ENCODE measurements at regions of chr12 and their contacts with region 1.

Region 1: GRCh38 chr12:6533923-6534694 is at the start of gene GAPDH:
- DNase-seq: peak; percentile 92 to 95
- ATAC-seq: peak; percentile 68 to 76 (median 70)
- H3K4me3 ChIP-seq: peak within 1 kb of the TSS; percentile 86
- H3K27ac ChIP-seq: peak within 1 kb of the TSS; percentile 97
- H3K4me1 ChIP-seq: peaks cover 47% of the 10 kb centered on the region
- H3K27me3 ChIP-seq: no peaks in the 10 kb centered on the region
- CTCF ChIP-seq: no peak
- total RNA-seq, gene GAPDH: 7,136 to 10,782 (median 8,991) TPM

Region 2: DNA sequence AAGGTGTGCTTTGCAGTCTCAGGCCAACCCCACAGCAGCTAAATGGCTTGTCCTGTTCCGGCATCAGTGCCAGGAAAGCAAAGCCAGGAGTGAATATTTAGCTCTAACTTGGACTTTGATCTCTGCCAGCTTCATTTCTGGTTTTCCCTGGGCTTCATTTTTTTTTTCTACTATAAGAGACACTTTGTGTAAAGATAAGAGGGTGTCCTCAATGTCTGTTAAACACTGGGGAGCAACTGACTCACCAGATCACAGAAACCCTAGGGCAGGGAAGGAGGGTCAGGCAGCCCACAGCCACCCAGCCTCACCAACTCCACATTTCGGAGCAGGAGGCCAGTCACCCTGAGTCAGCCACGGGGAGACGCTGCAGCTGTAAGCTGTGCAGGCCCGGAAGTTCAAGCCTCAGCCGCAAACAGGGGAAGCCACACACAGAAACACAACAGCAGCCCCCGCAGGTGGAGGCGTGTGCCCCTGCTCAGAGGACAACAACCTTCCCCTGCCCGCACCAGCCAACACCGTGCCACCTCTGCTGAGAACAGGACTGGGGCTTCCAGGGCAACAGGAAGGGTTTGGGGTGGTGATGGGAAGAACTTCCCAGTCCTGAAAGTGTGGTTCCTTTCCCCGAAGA is 198.5 kb before region 1 on chr12:
- intact Hi-C with region 1: loop called (anchors 5 kb)
- DNase-seq: peak; percentile 84 to 86
- ATAC-seq: peak; percentile 59 to 70 (median 62)
- H3K4me3 ChIP-seq: peak overlapping the region; percentile 99
- H3K27ac ChIP-seq: peak overlapping the region; percentile 88
- H3K4me1 ChIP-seq: peaks cover 56% of the 10 kb centered on the region
- H3K27me3 ChIP-seq: no peaks in the 10 kb centered on the region
- CTCF ChIP-seq: peak; percentile 42

Region 3: DNA sequence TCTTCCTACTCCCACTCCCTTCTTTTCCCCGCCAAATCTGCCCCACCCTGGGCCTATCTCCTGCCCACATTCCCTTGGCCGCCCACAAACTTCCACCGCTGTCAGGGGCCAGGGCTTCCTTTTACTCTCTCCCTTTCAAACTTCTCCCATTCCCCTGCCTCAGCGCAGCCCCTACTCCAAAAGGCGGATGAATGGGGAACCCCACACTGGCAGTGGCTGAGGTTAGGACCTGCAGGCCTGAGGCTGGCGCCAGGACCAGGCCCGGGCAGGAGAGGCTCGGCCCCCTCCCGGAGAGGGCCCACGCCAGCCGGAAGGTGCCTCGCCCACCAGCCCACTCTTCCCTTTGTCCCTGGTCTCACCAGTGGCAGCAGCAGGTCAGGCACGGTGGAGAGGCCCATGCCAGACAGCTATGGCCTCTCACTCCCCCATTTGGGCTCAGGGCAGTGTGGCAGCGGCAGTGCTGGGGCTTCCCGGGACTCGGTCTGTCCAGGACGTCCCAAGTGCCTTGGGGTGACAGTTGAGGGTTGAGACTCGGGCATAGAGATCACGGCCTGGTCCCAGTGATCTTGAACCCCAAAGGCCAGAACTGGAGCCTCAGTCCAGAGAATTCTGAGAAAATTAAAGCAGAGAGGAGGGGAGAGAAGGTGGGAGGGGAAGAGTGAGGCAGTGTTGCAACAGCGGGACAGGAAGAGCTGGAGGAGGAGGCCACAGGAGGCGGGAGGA is 192.5 kb before region 1 on chr12 and contains the start of gene TNFRSF1A:
- intact Hi-C with region 1: loop called (anchors 5 kb)
- DNase-seq: peak; percentile 73 to 85
- ATAC-seq: peak; percentile 81 to 89 (median 84)
- H3K4me3 ChIP-seq: peak within 1 kb of the TSS; percentile 99
- H3K27ac ChIP-seq: peak within 1 kb of the TSS; percentile 88
- H3K4me1 ChIP-seq: peaks cover 46% of the 10 kb centered on the region
- H3K27me3 ChIP-seq: no peaks in the 10 kb centered on the region
- CTCF ChIP-seq: no peak
- total RNA-seq, gene TNFRSF1A: 38.8 to 224 (median 127) TPM

Region 4: GRCh38 chr12:6363611-6364328 is 170.3 kb before region 1 on chr12:
- intact Hi-C with region 1: no loop called
- DNase-seq: peak; percentile 44 to 71
- ATAC-seq: peak; percentile 38 to 59 (median 42)
- H3K4me3 ChIP-seq: peak overlapping the region; percentile 70
- H3K27ac ChIP-seq: peak overlapping the region; percentile 83
- H3K4me1 ChIP-seq: peaks cover 17% of the 10 kb centered on the region
- H3K27me3 ChIP-seq: no peaks in the 10 kb centered on the region
- CTCF ChIP-seq: no peak

Region 5: DNA sequence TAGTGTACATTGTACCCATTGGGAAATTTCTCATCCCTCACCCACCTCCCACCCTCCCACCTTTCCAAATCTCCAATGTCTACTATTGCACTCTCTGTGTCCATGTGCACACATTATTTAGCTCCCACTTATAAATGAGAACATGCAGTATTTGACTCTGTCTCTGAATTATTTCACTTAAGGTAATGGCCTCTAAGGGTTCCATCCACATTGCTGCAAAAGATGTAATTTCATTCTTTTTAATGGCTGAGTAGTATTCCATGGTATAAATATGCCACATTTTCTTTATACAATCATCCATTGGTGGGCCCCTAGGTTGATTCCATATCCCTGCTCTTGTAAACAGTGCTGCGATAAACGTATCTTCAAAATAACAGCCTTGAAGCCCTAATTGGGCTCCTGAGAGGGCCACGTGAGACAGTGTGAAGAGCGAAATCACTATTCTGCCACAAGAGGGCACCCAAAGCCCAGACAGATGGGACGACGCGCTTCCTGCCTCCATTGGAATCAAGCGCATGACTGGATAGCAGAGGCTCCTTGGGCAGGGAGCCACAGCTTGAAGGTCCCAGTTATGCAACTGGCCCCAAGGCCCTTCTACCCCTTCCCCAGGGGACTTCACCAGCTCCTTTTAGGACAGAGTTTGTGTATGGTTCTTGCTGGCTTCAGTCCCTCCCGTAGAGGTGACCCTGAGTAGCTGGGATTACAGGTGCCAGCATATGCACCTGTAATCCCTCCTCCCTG is 110.7 kb before region 1 on chr12:
- intact Hi-C with region 1: loop called (anchors 2 to 5 kb)
- DNase-seq: peak; percentile 86 to 91
- ATAC-seq: peak; percentile 98 to 99 (median 98)
- H3K4me3 ChIP-seq: no peak overlapping the region
- H3K27ac ChIP-seq: peak overlapping the region; percentile 54
- H3K4me1 ChIP-seq: peaks cover 8% of the 10 kb centered on the region
- H3K27me3 ChIP-seq: no peaks in the 10 kb centered on the region
- CTCF ChIP-seq: peak; percentile 87

Region 6: GRCh38 chr12:6493497-6494257 is 40.4 kb before region 1 on chr12 and contains the start of gene NCAPD2:
- intact Hi-C with region 1: loop called in 1 of 2 experiments (anchors 5 kb)
- DNase-seq: peak; percentile 94 to 97
- ATAC-seq: peak; percentile 94
- H3K4me3 ChIP-seq: peak within 1 kb of the TSS; percentile 89
- H3K27ac ChIP-seq: peak within 1 kb of the TSS; percentile 99
- H3K4me1 ChIP-seq: peaks cover 21% of the 10 kb centered on the region
- H3K27me3 ChIP-seq: no peaks in the 10 kb centered on the region
- CTCF ChIP-seq: peak; percentile 22
- total RNA-seq, gene NCAPD2: 10.1 to 13.4 (median 11.2) TPM

Region 7: DNA sequence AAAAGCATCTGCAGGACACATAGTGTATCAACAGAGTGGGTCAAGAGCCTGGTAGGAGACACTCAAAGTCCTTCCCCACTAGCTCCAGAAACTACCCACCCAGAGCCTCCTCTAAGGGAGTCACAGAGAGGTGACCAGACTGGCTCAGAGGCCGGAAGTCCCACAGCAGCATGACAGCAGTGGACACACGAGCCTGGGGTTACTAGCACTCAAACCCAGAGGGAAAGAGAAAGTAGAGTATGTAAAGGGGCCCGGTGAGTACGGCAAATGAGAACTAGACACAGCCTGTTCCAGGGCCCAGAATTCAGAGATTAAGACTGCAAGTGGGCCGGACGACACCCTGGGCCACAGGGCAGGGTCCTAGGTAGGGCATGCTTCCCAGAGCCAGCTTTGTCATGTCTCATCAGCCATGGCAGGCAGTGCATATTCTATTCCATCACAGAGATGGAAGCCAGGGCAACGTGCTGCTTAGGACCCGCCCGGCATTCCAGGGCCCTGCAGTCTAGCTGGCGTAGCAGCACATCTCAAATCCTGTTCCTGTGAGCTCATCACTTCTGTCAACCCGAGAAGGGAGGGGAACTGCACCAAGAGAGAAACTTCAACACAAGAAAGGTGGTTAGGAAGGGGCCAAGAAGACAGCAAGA is 17.5 kb after region 1 on chr12:
- intact Hi-C with region 1: loop called in 1 of 2 experiments (anchors 2 kb)
- DNase-seq: peak; percentile 62 to 76
- ATAC-seq: peak; percentile 9 to 39 (median 20)
- H3K4me3 ChIP-seq: peak overlapping the region; percentile 95
- H3K27ac ChIP-seq: peak overlapping the region; percentile 100
- H3K4me1 ChIP-seq: peaks cover 49% of the 10 kb centered on the region
- H3K27me3 ChIP-seq: no peaks in the 10 kb centered on the region
- CTCF ChIP-seq: no peak

Region 8: GRCh38 chr12:7005311-7005710 is 471.2 kb after region 1 on chr12:
- intact Hi-C with region 1: no loop called
- DNase-seq: no peak
- ATAC-seq: no peak
- H3K4me3 ChIP-seq: no peak overlapping the region
- H3K27ac ChIP-seq: peak overlapping the region; percentile 31
- H3K4me1 ChIP-seq: peaks cover 84% of the 10 kb centered on the region
- H3K27me3 ChIP-seq: no peaks in the 10 kb centered on the region
- CTCF ChIP-seq: no peak

Measured in psoas muscle (tissue), 8 donors.